Tibial artery (tissue), 4 donors: ENCODE measurements at regions of chr1 and their contacts with region 1.

Region 1: GRCh38 chr1:168381850-168382249 is 101.2 kb downstream of the TBX19 start:
- DNase-seq: no peak
- H3K4me3 ChIP-seq: no peak overlapping the region
- H3K27ac ChIP-seq: no peak overlapping the region
- H3K4me1 ChIP-seq: no peaks in the 10 kb centered on the region
- H3K27me3 ChIP-seq: peaks cover 0 to 3% of the 10 kb centered on the region in 2 donors
- CTCF ChIP-seq: no peak

Region 2: GRCh38 chr1:168585191-168585590 is 203.3 kb after region 1 on chr1:
- intact Hi-C with region 1: no loop called
- DNase-seq: no peak
- H3K4me3 ChIP-seq: no peak overlapping the region
- H3K27ac ChIP-seq: no peak overlapping the region
- H3K4me1 ChIP-seq: peaks cover 0 to 15% (median 3%) of the 10 kb centered on the region in 4 donors
- H3K27me3 ChIP-seq: no peaks in the 10 kb centered on the region
- CTCF ChIP-seq: no peak

Region 3: DNA sequence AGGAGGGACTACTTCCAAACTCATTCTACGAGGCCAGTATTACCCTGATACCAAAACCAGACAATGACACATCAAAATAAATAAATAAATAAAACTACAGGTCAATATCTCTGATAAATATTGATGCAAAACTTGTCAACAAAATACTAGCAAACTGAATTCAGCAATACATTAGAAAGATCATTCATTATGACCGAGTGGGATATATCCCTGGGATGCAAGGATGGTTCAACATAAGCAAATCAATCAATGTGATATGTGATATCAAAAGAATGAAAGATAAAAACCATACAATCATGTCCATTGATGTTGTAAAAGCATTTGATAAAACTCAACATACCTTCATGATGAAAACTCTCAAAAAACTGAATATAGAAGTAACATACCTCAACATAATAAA is 949.1 kb after region 1 on chr1:
- intact Hi-C with region 1: loop called (anchors 5 kb)
- DNase-seq: no peak
- H3K4me3 ChIP-seq: no peak overlapping the region
- H3K27ac ChIP-seq: no peak overlapping the region
- H3K4me1 ChIP-seq: no peaks in the 10 kb centered on the region
- H3K27me3 ChIP-seq: no peaks in the 10 kb centered on the region
- CTCF ChIP-seq: no peak